Activated CD4-positive, alpha-beta T cell treated with anti-CD3 and anti-CD28 coated beads, Interleukin-2, amount 10 ng/mL, durations not matched to agents 24 days and 14 days (primary cell): ENCODE measurements at regions of chr13 and their contacts with region 1.

Region 1: DNA sequence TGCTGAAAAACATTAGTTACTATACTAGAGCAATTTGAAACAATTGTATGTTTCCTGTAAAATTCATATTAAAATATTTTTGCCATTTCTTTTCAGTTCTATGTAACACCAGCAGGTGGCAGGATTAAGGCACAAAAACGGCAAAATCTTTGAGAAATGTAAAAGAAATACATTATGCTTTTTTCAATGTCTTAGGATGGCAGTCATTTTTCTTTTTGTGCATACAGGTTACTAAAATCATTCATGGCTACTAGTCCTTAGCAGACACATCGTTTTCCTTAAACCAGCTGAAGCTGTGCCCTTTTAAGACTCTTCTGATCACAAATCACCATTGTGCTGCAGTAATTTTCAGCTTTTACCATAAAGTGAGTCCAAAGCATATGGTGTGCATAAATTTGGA is 800.7 kb upstream of the SLITRK5 start:
- DNase-seq: no peak
- H3K4me3 Mint-ChIP-seq: no peak overlapping the region
- H3K27ac Mint-ChIP-seq: no peak overlapping the region
- H3K4me1 Mint-ChIP-seq: no peaks in the 10 kb centered on the region
- H3K27me3 Mint-ChIP-seq: no peaks in the 10 kb centered on the region

Region 2: GRCh38 chr13:86892330-86892729 is 21.9 kb after region 1 on chr13:
- intact Hi-C with region 1: no loop called
- DNase-seq: no peak
- H3K4me3 Mint-ChIP-seq: no peak overlapping the region
- H3K27ac Mint-ChIP-seq: no peak overlapping the region
- H3K4me1 Mint-ChIP-seq: no peaks in the 10 kb centered on the region
- H3K27me3 Mint-ChIP-seq: no peaks in the 10 kb centered on the region

Region 3: DNA sequence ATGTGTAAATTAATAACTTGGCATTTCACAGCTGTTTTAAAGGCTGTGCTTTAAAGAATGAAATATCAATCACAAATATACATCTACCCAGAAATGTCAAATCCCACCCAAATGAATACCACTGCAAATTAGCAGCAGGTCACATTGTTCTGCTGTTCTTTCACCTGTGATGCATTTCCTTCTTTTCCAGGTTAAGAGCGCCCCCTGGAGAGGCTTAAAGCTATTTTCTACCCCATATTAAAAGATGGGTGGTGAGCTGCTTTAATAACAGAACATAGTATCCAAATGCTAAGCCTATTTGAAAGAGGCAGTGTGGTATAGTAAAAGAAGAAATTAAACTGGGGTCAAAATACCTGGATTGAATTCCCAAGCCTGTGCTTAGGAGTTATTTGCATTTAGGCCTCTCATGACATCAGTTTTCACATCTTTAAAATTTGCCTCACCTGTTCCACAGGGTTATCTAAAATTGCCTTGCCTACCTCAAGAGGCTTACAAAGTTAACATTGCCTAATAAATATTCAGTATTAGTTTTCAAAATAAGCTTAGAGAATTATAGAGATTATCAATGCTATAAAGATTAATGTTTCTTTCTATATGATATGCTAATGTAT is 403.9 kb after region 1 on chr13:
- intact Hi-C with region 1: loop called (anchors 5 kb)
- DNase-seq: peak; percentile 63
- H3K4me3 Mint-ChIP-seq: no peak overlapping the region
- H3K27ac Mint-ChIP-seq: no peak overlapping the region
- H3K4me1 Mint-ChIP-seq: no peaks in the 10 kb centered on the region
- H3K27me3 Mint-ChIP-seq: no peaks in the 10 kb centered on the region

Region 4: GRCh38 chr13:87376081-87376480 is 505.6 kb after region 1 on chr13:
- intact Hi-C with region 1: no loop called
- DNase-seq: no peak
- H3K4me3 Mint-ChIP-seq: no peak overlapping the region
- H3K27ac Mint-ChIP-seq: peak overlapping the region; percentile 26
- H3K4me1 Mint-ChIP-seq: no peaks in the 10 kb centered on the region
- H3K27me3 Mint-ChIP-seq: no peaks in the 10 kb centered on the region